CD4-positive, alpha-beta T cell (primary cell): ENCODE measurements at regions of chr2 and their contacts with region 1.

Region 1: GRCh38 chr2:230987137-230988020 is 8.5 kb upstream of the SPATA3 start:
- DNase-seq: peak; percentile 36 to 86 (median 73)
- ATAC-seq: peak; percentile 74
- H3K4me3 ChIP-seq: peak overlapping the region; percentile 59
- H3K4me3 Mint-ChIP-seq: peak overlapping the region; percentile 38
- H3K27ac ChIP-seq: no peak overlapping the region
- H3K27ac Mint-ChIP-seq: no peak overlapping the region
- H3K4me1 ChIP-seq: peaks cover 31% of the 10 kb centered on the region
- H3K4me1 Mint-ChIP-seq: peaks cover 22% of the 10 kb centered on the region
- H3K27me3 ChIP-seq: peaks cover 6 to 10% of the 10 kb centered on the region in 2 experiments
- H3K27me3 Mint-ChIP-seq: peaks cover 24% of the 10 kb centered on the region
- CTCF ChIP-seq: peak; percentile 92

Region 2: GRCh38 chr2:230902180-230902899 is 85.0 kb before region 1 on chr2:
- CTCF ChIA-PET with region 1: interaction called, 11 read pairs
- POLR2A ChIA-PET with region 1: interaction called, 7 read pairs
- intact Hi-C with region 1: loop called (anchors 1 kb)
- DNase-seq: peak; percentile 29 to 82 (median 42)
- ATAC-seq: peak; percentile 19
- H3K4me3 ChIP-seq: no peak overlapping the region
- H3K4me3 Mint-ChIP-seq: no peak overlapping the region
- H3K27ac ChIP-seq: no peak overlapping the region
- H3K27ac Mint-ChIP-seq: no peak overlapping the region
- H3K4me1 ChIP-seq: peaks cover 27% of the 10 kb centered on the region
- H3K4me1 Mint-ChIP-seq: peaks cover 33% of the 10 kb centered on the region
- H3K27me3 ChIP-seq: no peaks in the 10 kb centered on the region
- H3K27me3 Mint-ChIP-seq: no peaks in the 10 kb centered on the region
- CTCF ChIP-seq: peak; percentile 70